ENCODE measurements at regions of chr6 and their contacts with region 1.

Region 1: GRCh38 chr6:165850434-165851019 is 187.5 kb upstream of the PDE10A start:
- DNase-seq: peak in 1 of 2 donors; percentile 72
- ATAC-seq: no peak

Region 2: DNA sequence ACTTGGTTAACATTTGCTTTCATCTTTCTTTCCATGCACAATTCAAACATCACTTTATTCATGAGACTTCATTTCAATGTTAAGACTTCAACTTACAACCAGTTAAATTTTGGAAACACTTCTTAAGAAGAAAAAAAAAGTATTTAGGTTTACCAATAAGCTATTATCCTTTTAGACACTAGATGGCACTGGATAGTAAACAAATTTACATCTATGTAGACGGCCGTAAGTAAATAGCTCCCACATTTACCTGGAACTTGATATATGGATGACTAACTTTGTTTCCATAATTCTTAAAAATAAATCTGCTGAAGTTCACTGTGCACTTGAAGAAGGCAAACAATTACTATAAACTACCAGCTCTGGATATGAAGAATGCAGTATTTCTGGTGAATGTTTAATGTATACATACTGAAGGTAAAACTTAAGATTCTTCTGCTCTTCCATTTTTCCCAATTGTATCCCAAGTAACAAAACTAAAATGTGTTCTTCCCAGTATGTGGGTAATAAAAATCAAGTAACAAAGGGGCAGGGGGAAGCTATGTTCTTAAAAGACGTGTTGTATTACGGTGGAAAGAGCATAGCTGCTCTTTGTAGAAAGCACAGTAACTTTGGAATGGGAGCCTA is 410.5 kb before region 1 on chr6:
- intact Hi-C with region 1: loop called (anchors 5 to 10 kb)
- DNase-seq: no peak
- ATAC-seq: no peak

Region 3: DNA sequence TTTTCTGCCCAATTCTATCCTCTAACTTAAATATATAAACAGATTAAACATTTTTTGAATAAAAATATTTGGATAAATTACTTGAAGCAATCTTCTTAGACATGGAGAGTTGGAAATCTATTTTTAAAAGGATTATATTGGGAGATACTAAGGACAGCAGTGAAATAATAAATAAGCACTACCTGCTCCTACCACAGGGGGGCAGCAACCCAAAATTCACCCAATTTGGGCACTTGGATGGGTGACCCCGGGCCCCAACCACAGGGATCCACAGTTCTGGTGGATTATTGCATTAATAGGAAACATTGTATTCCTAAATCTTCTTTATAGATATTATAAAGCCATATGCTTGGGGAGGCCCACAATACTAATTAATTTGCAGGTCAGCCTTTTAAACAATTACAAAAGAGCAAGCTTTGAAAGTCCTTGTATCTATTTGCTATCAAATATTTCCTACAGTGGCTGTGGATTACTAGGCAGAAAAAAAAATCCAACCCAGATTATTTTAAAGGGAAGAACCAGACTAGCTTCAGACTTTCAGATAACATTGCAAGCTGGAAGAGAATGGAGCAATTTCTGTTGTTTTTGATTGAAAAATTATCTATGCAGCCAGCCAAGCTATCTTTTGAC is 121.1 kb before region 1 on chr6:
- intact Hi-C with region 1: loop called in 1 of 2 experiments (anchors 5 kb)
- DNase-seq: peak in 1 of 2 donors; percentile 28
- ATAC-seq: peak; percentile 48

Region 4: DNA sequence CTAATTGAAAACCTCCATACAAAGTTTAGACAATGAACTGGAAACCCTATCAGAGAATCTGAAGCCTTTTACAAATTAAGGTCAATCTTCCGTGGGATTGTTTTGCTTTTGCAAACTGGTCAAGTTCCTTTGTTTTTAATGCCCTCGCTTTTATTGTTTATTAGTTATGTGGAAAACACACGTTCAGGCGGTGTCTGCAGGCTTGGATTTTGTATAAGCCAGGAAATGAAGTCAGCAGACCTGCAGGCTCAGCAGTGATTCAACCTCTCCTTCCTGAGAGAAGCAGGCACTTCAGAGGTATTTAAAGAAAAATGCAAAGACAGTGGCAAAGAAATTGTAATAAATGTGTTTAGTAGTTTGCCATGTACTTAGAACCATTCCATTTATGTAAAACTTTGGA is 84.1 kb before region 1 on chr6:
- intact Hi-C with region 1: no loop called
- DNase-seq: no peak
- ATAC-seq: no peak

Region 5: GRCh38 chr6:165976705-165977104 is 126.2 kb after region 1 on chr6:
- intact Hi-C with region 1: no loop called
- DNase-seq: no peak
- ATAC-seq: no peak

Region 6: DNA sequence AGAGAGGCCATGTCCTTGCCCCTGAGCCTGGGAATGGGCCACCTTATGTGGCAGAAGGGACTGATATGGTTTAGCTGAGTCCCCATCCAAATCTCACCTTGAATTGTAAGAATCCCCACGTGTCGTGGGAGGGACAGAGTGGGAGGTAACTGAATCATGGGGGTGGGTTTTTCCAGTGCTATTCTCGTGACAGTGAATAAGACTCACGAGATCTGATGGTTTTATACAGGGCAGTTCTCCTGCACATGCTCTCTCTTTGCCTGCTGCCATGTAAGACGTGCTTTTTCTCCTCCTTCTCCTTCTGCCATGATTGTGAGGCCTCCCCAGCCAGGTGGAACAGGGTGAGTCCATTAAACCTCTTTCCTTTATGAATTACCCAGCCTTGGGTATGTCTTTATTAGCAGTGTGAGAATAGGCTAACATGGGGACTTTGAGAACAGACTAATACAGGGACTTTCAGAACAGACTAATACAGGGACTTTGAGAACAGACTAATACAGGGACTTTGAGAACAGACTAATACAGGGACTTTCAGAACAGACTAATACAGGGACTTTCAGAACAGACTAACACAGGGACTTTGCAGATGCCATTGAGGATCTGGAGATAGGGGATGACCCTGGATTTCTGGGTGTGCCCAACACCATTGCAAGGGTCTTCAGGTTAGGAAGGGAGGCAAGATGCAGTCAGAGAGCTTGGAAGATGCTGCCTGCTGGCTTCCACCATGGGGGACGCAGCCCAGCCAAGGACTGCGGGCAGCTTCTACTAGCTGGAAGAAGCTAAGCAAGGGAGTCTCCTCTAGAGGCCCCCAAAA is 649.0 kb after region 1 on chr6:
- intact Hi-C with region 1: no loop called
- DNase-seq: no peak
- ATAC-seq: no peak

Region 7: DNA sequence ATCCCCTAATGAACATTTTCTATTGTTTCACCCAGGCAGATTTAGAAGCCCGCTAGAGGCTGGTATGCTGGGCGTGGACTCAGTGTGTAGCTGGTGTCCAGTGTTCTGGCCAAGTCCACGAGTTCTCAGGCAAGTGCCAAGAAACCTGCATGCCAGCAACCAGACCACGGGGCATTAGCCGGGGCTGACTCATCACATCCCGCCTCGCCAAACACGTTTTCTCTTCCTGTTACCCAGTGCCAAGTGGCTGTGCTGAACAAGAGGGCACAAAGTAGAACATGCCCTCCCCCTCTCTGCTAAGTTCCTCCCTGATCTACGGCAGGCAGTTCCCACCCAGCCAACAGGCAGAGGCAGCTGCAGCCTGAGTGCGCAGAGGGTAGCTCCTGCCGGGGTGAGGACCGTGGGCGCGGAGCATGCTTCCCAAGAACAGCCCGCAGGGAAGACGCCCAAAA is 706.4 kb after region 1 on chr6:
- intact Hi-C with region 1: no loop called
- DNase-seq: peak; percentile 60 to 90
- ATAC-seq: peak; percentile 96

Measured in left colon (tissue), 2 donors.